Ascending aorta (tissue), 2 donors: ENCODE measurements at regions of chr18 and their contacts with region 1.

Region 1: DNA sequence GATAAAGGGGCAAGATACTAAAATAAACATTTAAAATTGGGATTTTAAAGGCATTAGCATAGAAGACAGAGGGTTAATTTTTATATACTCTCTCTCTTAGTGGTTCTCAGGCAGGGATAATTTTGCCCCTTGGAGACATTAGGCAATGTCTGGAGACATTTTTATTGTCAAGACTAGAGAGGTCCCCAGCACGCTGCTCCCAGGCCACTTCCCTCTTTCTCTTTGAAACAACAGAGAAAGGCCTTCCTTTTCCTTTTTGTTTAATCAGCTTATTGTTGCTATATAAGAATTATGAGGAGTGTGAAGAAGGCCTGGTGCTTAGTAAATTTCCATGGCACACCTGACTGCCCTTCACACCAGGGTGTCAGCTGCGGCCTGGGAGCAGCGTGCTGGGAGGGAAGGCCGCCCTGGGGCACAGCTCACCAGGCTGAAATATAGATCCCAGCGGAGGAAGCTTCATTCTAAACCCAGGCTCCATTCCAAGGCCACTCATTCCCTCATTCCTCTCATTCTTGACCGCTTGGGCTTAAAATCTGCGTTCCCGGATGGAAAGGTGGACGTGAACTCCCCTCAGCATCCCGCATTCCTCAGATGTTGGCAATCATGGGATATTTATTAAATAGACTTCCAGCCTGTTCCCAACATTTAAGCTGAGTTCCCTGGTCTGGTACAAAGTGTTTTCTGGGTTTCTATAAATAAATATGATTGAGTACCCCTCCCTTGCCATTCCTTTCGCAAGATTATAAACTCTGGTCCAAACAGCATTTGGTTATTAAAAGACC is 22.5 kb downstream of the SLC14A2 start:
- DNase-seq: peak in 1 of 2 donors; percentile 88
- H3K4me3 ChIP-seq: no peak overlapping the region
- H3K27ac ChIP-seq: peak overlapping the region; percentile 94 to 96
- H3K4me1 ChIP-seq: peaks cover 16 to 37% of the 10 kb centered on the region in 2 donors
- H3K27me3 ChIP-seq: no peaks in the 10 kb centered on the region
- CTCF ChIP-seq: no peak

Region 2: DNA sequence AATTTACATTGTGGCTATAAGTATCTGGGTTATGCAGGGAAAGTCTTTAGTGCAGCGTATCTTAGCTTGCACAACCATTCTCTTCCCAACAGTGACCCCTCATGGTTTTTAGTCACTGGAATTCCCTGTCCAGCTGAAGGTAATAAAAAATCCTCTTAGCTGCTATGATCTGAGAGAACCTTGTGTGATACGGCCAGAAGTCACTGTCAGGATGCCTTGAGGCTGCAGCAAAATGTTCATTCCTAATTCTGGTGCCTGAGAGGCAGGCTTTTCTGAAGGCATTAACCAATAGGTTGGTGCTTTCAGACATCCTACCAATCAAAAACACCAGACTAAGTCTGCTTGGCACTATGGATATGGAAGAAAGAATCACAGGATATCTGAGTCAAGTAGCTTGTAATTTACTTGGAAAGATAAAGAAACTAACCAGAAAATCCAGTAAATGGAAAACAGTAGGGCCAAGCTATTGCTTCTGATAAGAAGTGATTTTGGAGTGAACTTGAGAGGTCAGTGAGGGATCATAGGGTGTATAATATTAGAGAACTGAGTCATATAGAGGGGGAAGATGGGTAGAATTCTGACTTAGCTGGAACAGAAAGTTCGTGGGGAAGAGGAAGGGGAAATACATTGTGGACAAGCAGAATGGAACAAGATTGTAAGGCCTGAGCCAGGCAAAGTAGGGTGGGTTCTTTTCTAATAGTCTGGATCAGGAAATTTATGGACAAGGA is 111.5 kb before region 1 on chr18:
- intact Hi-C with region 1: loop called (anchors 1 kb)
- DNase-seq: no peak
- H3K4me3 ChIP-seq: no peak overlapping the region
- H3K27ac ChIP-seq: peak overlapping the region; percentile 16 to 53
- H3K4me1 ChIP-seq: peaks cover 10 to 28% of the 10 kb centered on the region in 2 donors
- H3K27me3 ChIP-seq: no peaks in the 10 kb centered on the region
- CTCF ChIP-seq: peak in 1 of 3 experiments; percentile 36

Region 3: DNA sequence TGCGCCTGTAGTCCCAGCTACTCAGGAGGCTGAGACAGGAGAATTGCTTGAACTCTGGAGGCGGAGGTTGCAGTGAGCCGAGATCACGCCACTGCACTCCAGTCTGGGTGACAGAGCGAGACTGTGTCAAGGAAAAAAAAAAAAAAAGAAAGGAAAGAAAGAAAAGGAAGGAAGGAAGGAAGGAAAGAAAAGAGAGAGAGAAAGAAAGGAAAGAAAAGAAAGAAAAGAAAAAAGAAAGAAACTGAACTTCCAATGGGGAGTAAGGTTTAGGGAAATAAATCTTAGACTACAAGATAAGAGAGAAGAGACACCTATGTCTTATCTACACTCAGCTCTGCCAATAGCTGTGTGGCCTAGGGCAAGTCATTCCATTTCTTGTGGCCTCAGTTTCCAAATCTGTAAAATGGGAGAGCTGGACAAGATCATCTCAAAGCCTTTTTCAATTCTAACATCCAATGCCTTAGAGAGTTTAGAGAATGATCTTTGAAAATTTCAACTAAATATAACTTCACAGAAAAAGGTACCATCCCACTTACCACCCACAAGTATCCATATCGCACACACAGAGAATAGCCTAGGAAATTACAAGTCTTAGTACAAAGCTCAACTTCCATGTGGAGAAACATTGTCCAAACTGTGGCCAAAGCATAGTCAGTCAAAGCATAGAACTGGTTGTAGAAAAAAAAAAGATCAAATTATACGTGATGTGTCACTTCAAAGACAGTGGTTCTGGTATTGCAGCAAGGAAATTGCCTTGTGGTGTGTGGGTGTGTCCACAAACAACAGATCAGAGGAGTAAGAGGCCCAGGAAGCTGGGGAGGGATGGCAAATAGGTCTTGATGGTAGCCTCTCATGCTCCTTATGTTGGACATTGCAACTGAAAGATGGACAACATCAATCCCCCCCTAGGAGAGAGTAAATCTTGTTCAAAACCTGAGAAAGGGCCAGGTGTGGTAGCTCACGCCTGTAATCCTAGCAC is 19.9 kb after region 1 on chr18:
- intact Hi-C with region 1: loop called (anchors 1 kb)
- DNase-seq: no peak
- H3K4me3 ChIP-seq: no peak overlapping the region
- H3K27ac ChIP-seq: peak overlapping the region in 1 of 2 donors; percentile 50
- H3K4me1 ChIP-seq: peaks cover 4 to 22% of the 10 kb centered on the region in 2 donors
- H3K27me3 ChIP-seq: no peaks in the 10 kb centered on the region
- CTCF ChIP-seq: no peak

Region 4: GRCh38 chr18:45755934-45756333 is 118.2 kb after region 1 on chr18:
- intact Hi-C with region 1: loop called (anchors 5 kb)
- DNase-seq: peak; percentile 44 to 94
- H3K4me3 ChIP-seq: no peak overlapping the region
- H3K27ac ChIP-seq: peak overlapping the region; percentile 71 to 73
- H3K4me1 ChIP-seq: peaks cover 13 to 27% of the 10 kb centered on the region in 2 donors
- H3K27me3 ChIP-seq: no peaks in the 10 kb centered on the region
- CTCF ChIP-seq: no peak